Cardiac septum (tissue), 1 donor: ENCODE measurements at regions of chr6 and their contacts with region 1.

Region 1: GRCh38 chr6:6724539-6725467 is 136.3 kb downstream of the LY86 start:
- DNase-seq: no peak

Region 2: GRCh38 chr6:6509284-6509683 is 215.5 kb before region 1 on chr6:
- intact Hi-C with region 1: no loop called
- DNase-seq: no peak

Region 3: GRCh38 chr6:6584310-6585002 is 140.3 kb before region 1 on chr6:
- intact Hi-C with region 1: no loop called
- DNase-seq: no peak

Region 4: DNA sequence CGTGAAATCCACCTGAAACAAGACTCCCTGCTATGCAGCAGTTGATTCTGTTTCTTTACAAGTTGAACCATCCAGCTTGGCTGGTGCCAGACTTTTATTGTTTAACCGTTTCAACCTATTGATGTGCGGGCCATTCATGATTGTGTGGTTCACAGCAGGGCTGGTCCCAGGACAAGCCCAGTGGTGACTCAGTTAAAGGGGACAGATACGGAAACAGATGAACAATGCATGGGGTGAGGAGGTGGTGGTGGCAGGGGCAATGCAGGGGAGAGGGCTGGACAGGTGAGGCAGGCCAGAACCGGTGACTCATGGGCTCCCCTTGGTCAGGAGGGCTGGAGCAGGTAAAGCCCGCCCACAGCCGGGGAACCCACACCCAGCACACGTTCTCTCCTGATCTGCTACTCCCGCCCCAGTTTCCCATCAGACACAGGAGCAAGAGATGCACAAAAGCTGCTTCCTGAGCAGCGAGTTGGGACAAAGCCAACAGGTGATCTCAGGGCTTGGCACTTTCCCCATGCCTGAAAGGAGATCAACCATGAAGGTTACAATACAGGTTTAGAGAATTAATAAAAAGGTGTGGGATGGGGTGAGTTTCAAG is 95.9 kb after region 1 on chr6:
- intact Hi-C with region 1: no loop called
- DNase-seq: no peak

Region 5: GRCh38 chr6:7112741-7113313 is 388.0 kb after region 1 on chr6:
- intact Hi-C with region 1: loop called (anchors 10 kb)
- DNase-seq: no peak